PC-3 (cell line): ENCODE measurements at regions of chr13 and their contacts with region 1.

Region 1: DNA sequence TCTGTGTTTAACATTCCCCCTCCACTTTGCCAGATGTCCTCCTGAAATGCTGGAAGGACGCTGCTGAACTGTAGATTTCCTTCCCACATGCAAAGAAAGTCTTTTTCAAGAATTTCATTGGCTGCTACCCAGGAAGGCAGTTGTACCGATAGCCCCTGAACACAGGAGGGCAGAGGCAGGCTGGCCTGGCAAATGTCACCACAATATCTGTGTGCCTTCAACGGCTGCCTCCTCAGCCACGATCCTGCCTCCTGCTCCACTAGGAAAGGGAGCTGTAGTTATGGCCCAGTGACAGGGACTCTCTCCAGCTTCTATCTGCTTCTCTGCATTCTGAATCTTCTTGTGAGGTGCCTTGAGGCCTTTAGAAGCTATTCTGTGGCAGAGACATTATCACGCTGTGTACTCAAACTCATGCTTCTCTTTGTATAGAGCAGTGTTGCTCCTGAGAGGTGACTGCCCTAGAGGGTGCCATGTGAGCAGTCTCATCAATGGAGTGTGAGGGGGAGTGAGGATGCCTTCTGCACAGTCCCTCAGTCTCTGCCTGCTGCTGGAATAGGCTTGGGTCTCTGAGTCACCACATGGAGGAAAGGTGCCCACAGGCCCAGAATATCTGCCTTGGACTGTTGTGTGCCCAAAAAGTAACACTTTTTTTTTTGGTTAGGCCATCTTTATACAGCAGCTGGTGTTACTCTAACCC is 279.8 kb downstream of the DNAJC15 start:
- DNase-seq: peak; percentile 50
- ATAC-seq: peak; percentile 59
- H3K4me3 ChIP-seq: no peak overlapping the region
- H3K27ac ChIP-seq: no peak overlapping the region
- H3K4me1 ChIP-seq: peaks cover 14% of the 10 kb centered on the region; the same call in 1 of the 2 replicates
- H3K27me3 ChIP-seq: no peaks in the 10 kb centered on the region
- CTCF ChIP-seq: peak; percentile 56

Region 2: GRCh38 chr13:43159026-43159461 is 144.1 kb before region 1 on chr13:
- CTCF ChIA-PET with region 1: no interaction called
- POLR2A ChIA-PET with region 1: no interaction called
- intact Hi-C with region 1: loop called (anchors 10 kb)
- DNase-seq: no peak
- ATAC-seq: no peak
- H3K4me3 ChIP-seq: no peak overlapping the region
- H3K27ac ChIP-seq: no peak overlapping the region
- H3K4me1 ChIP-seq: peaks cover 8% of the 10 kb centered on the region
- H3K27me3 ChIP-seq: no peaks in the 10 kb centered on the region
- CTCF ChIP-seq: no peak

Region 3: GRCh38 chr13:43737392-43737923 is 434.3 kb after region 1 on chr13:
- CTCF ChIA-PET with region 1: no interaction called
- POLR2A ChIA-PET with region 1: no interaction called
- intact Hi-C with region 1: loop called (anchors 5 kb)
- DNase-seq: no peak
- ATAC-seq: no peak
- H3K4me3 ChIP-seq: no peak overlapping the region
- H3K27ac ChIP-seq: no peak overlapping the region
- H3K4me1 ChIP-seq: no peaks in the 10 kb centered on the region
- H3K27me3 ChIP-seq: no peaks in the 10 kb centered on the region
- CTCF ChIP-seq: no peak

Region 4: GRCh38 chr13:43786773-43787517 is 483.8 kb after region 1 on chr13 and contains the start of gene ENOX1:
- CTCF ChIA-PET with region 1: no interaction called
- POLR2A ChIA-PET with region 1: interaction called, 6 read pairs
- intact Hi-C with region 1: loop called (anchors 5 kb)
- DNase-seq: peak; percentile 47
- ATAC-seq: peak; percentile 59
- H3K4me3 ChIP-seq: peak within 1 kb of the TSS; percentile 79
- H3K27ac ChIP-seq: no peak within 1 kb of the TSS
- H3K4me1 ChIP-seq: peaks cover 7% of the 10 kb centered on the region; the same call in 1 of the 2 replicates
- H3K27me3 ChIP-seq: no peaks in the 10 kb centered on the region
- CTCF ChIP-seq: no peak
- total RNA-seq, gene ENOX1: 0.81 and 0.95 TPM in 2 replicates

Region 5: DNA sequence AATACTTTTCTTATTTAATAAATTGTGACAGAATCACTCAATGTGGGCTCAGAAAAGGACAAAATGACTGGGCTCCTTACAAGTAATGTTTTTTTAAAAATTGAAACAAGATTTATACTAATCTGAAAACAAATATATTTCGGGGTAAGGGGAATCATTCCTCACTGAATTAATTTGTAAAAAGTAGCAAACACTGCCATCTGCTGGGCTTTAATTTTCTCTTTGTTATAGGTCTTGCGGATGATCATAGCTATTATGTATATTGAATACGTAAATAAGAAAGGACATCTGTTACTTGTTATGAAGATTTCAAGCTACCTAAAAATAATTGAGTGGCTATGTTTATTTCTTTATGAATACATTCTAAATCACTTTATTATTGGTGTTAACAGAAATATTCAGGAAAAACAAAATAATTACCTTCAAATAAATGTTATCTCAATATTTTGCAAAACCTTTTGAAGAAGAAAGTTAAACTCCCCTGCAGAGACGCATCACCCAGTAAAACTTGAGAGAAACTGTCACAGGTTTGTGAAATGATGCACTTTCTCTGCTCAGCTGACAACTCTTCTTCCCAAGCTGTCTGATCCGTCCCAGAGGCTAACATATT is 501.4 kb after region 1 on chr13:
- CTCF ChIA-PET with region 1: interaction called, 5 read pairs
- POLR2A ChIA-PET with region 1: no interaction called
- intact Hi-C with region 1: loop called (anchors 5 kb)
- DNase-seq: peak; percentile 82
- ATAC-seq: peak; percentile 66
- H3K4me3 ChIP-seq: peak overlapping the region; percentile 63
- H3K27ac ChIP-seq: peak overlapping the region; percentile 95
- H3K4me1 ChIP-seq: peaks cover 29% of the 10 kb centered on the region
- H3K27me3 ChIP-seq: no peaks in the 10 kb centered on the region
- CTCF ChIP-seq: peak; percentile 63